H1 (cell line): ENCODE measurements at regions of chr3 and their contacts with region 1.

Region 1: GRCh38 chr3:22565393-22565792 is 637.7 kb upstream of the UBE2E2 start:
- DNase-seq: no peak
- H3K4me3 ChIP-seq: no peak overlapping the region
- H3K27ac ChIP-seq: no peak overlapping the region
- H3K4me1 ChIP-seq: no peaks in the 10 kb centered on the region
- H3K27me3 ChIP-seq: no peaks in the 10 kb centered on the region
- CTCF ChIP-seq: no peak
- EP300 ChIP-seq: no peak
- POLR2A ChIP-seq: no peak
- RAD21 ChIP-seq: no peak

Region 2: DNA sequence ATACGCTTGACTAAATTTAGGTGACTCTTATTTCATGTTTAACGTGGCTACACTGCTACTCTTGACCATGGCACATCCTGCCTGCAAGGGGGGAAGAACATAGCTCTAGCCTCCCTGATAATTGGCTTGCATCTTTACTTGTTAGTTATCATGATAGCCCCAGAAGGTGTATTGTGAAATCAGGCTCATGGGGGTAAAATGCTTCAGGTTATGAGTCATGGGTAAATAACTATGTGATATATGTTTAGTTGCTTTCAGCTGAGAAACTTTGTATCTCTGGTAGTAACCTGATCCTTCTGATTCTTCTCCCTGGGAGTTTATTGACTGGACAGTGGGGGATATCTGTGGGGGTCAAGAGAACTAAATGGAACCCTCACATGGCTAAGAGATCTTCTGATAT is 23.1 kb before region 1 on chr3:
- CTCF ChIA-PET with region 1: interaction called, 10 read pairs
- POLR2A ChIA-PET with region 1: no interaction called
- DNase-seq: no peak
- H3K4me3 ChIP-seq: no peak overlapping the region
- H3K27ac ChIP-seq: no peak overlapping the region
- H3K4me1 ChIP-seq: no peaks in the 10 kb centered on the region
- H3K27me3 ChIP-seq: no peaks in the 10 kb centered on the region
- CTCF ChIP-seq: no peak
- EP300 ChIP-seq: no peak
- POLR2A ChIP-seq: no peak
- RAD21 ChIP-seq: no peak

Region 3: DNA sequence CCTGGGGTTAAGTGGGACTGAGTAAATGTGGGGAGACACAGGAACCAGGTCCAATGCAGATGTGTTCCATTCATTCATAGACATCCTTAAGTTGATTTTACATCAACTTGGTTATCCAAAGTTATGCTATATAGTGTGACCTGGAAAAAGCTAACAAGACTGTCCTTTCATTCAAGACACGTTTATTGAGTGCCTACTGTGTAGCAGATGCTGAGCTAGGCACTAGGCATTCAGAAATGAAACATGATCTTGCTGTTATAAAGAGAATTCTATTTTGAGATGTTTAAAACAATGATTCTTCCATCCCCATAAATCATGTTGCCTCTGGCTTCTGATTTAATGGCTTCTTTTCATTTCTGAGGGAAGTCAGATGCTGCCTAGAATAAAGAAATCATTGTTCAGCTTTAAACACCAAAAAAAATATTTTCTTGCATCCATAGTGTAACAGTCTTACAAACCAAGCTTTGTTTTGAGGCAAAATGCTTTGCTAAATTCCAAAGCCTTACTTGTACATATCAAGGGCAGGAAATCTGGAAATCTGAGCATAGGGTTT is 16.8 kb after region 1 on chr3:
- CTCF ChIA-PET with region 1: interaction called, 12 read pairs
- POLR2A ChIA-PET with region 1: no interaction called
- DNase-seq: no peak
- H3K4me3 ChIP-seq: no peak overlapping the region
- H3K27ac ChIP-seq: no peak overlapping the region
- H3K4me1 ChIP-seq: no peaks in the 10 kb centered on the region
- H3K27me3 ChIP-seq: no peaks in the 10 kb centered on the region
- CTCF ChIP-seq: no peak
- EP300 ChIP-seq: no peak
- POLR2A ChIP-seq: no peak
- RAD21 ChIP-seq: no peak

Region 4: GRCh38 chr3:22587446-22587845 is 22.1 kb after region 1 on chr3:
- CTCF ChIA-PET with region 1: interaction called, 12 read pairs
- POLR2A ChIA-PET with region 1: no interaction called
- DNase-seq: no peak
- H3K4me3 ChIP-seq: no peak overlapping the region
- H3K27ac ChIP-seq: no peak overlapping the region
- H3K4me1 ChIP-seq: no peaks in the 10 kb centered on the region
- H3K27me3 ChIP-seq: no peaks in the 10 kb centered on the region
- CTCF ChIP-seq: no peak
- EP300 ChIP-seq: no peak
- POLR2A ChIP-seq: no peak
- RAD21 ChIP-seq: no peak

Region 5: GRCh38 chr3:22685597-22685996 is 120.2 kb after region 1 on chr3:
- CTCF ChIA-PET with region 1: interaction called, 14 read pairs
- POLR2A ChIA-PET with region 1: no interaction called
- DNase-seq: no peak
- H3K4me3 ChIP-seq: no peak overlapping the region
- H3K27ac ChIP-seq: no peak overlapping the region
- H3K4me1 ChIP-seq: peaks cover 0 to under 1% (median 0%) of the 10 kb centered on the region in 4 experiments; a peak in 1 of 7 replicates
- H3K27me3 ChIP-seq: no peaks in the 10 kb centered on the region
- CTCF ChIP-seq: peak in 2 of 3 experiments; percentile 46 to 56; a peak in 3 of 4 replicates
- EP300 ChIP-seq: no peak
- POLR2A ChIP-seq: no peak
- RAD21 ChIP-seq: peak; percentile 73 to 75

Region 6: GRCh38 chr3:22887664-22888291 is 322.4 kb after region 1 on chr3:
- CTCF ChIA-PET with region 1: interaction called, 29 read pairs
- POLR2A ChIA-PET with region 1: no interaction called
- DNase-seq: no peak
- H3K4me3 ChIP-seq: no peak overlapping the region
- H3K27ac ChIP-seq: no peak overlapping the region
- H3K4me1 ChIP-seq: no peaks in the 10 kb centered on the region
- H3K27me3 ChIP-seq: no peaks in the 10 kb centered on the region
- CTCF ChIP-seq: peak in 2 of 3 experiments; percentile 64 to 65; a peak in 3 of 4 replicates
- EP300 ChIP-seq: no peak
- POLR2A ChIP-seq: no peak
- RAD21 ChIP-seq: peak; percentile 72 to 81